GM10248 (cell line): ENCODE measurements at regions of chr9 and their contacts with region 1.

Region 1: GRCh38 chr9:132288361-132288760 is 66.4 kb downstream of the SETX start:
- DNase-seq: no peak
- CTCF ChIP-seq: no peak

Region 2: DNA sequence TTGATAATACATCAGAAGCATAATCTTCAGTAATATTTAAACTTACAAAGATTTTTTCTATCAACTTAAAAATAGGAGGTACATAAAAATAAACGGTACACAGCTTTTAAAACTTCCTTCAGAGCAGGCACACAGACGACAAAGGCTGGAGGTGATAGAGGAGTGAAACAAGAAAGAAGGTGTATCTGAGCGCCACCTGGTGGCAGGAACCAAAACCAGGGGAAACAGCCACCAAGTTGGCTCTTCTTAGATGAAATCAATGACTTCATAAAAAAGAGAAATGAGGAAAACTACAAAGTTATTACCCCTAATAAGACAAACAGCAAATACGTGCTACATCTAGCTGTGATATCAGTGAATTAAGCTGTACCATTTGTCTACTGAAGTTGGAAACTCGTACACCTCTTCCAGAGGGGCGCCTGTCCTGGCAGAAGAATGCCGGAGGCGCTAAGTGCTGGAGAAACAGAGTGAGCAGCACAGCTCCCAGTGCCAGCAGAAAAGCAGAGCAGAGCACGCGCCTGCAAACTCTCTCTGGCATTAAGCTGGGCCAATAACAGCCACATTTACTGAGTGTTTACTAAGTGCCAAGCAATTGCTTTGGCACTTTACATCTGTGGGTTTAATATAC is 19.5 kb before region 1 on chr9:
- CTCF ChIA-PET with region 1: interaction called, 10 read pairs
- POLR2A ChIA-PET with region 1: no interaction called
- DNase-seq: peak; percentile 60
- CTCF ChIP-seq: peak; percentile 82

Region 3: DNA sequence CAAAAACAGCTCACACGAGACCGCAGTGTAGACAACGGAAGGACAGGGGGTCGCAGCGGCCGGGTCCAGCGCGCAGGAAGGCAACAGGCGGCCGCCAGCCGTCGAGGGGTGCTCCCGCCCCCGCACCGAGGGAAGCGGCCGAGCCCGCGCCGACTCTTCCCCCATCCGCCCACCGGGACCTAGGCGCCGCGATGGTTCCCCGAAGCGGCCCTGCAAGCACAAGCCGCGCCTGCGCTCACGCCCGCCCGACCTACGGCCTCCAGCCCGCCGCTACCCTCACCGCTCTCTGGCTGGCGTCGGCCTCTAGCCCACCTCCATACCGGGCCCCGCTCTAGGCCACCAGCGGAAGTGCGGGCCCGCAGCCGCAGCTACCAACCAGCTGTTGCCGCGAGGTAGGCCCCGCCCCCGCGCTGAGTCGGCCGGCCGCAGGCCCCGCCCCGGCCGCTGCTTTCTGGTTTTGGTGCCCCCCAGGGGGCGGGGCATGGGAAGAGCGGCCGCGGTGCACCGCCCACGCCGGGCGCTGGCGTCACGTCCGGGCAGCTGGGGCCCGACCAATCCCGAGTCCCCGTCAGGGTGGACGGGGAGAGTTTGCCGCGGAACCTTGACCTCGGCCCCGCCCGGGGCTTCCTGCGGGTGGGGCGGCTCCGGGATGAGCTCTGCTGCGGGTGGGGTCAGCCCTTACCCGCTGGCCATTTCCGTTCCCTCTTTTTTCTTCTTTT is 66.4 kb after region 1 on chr9 and contains the start of gene SETX:
- CTCF ChIA-PET with region 1: no interaction called
- POLR2A ChIA-PET with region 1: interaction called, 10 read pairs
- DNase-seq: peak; percentile 100
- CTCF ChIP-seq: no peak

Region 4: DNA sequence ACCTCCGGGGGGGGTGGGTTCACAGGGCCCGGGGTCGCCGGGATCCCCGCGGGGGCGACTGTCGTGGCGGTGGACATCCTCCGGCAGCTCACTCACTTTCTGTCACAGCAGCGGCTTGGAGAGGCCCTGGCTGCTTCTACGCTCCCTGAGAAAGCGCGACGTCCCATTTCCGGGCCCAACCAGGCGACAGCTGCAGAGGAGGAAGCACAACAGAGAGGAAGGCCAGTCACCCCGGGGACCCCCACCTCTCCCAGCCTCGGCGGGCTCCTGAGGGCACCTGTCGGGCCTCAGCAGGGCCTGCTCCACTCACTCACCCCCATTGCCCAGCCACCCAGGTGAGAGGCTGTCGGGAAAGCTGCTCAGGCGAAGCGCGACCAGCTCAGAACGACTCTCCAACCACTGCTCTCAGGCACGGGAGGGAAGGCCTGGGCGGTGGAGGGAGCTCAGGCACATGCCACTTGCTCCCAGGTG is 1765.1 kb after region 1 on chr9:
- CTCF ChIA-PET with region 1: no interaction called
- POLR2A ChIA-PET with region 1: interaction called, 10 read pairs
- DNase-seq: no peak
- CTCF ChIP-seq: no peak